Motor neuron (in vitro differentiated cells): ENCODE measurements at regions of chr5 and their contacts with region 1.

Region 1: GRCh38 chr5:67246108-67246507 is 49.5 kb upstream of the CD180 start:
- ATAC-seq: peak; percentile 29 to 77 (median 46)
- H3K4me3 ChIP-seq: no peak overlapping the region
- H3K27ac ChIP-seq: no peak overlapping the region
- H3K4me1 ChIP-seq: peaks cover 0 to 7% of the 10 kb centered on the region in 2 donors

Region 2: GRCh38 chr5:67493676-67494075 is 247.6 kb after region 1 on chr5:
- in situ Hi-C with region 1: loop called in 1 of 9 experiments (anchors 25 kb)
- ATAC-seq: peak; percentile 31 to 95 (median 65)
- H3K4me3 ChIP-seq: no peak overlapping the region
- H3K27ac ChIP-seq: no peak overlapping the region
- H3K4me1 ChIP-seq: no peaks in the 10 kb centered on the region

Region 3: DNA sequence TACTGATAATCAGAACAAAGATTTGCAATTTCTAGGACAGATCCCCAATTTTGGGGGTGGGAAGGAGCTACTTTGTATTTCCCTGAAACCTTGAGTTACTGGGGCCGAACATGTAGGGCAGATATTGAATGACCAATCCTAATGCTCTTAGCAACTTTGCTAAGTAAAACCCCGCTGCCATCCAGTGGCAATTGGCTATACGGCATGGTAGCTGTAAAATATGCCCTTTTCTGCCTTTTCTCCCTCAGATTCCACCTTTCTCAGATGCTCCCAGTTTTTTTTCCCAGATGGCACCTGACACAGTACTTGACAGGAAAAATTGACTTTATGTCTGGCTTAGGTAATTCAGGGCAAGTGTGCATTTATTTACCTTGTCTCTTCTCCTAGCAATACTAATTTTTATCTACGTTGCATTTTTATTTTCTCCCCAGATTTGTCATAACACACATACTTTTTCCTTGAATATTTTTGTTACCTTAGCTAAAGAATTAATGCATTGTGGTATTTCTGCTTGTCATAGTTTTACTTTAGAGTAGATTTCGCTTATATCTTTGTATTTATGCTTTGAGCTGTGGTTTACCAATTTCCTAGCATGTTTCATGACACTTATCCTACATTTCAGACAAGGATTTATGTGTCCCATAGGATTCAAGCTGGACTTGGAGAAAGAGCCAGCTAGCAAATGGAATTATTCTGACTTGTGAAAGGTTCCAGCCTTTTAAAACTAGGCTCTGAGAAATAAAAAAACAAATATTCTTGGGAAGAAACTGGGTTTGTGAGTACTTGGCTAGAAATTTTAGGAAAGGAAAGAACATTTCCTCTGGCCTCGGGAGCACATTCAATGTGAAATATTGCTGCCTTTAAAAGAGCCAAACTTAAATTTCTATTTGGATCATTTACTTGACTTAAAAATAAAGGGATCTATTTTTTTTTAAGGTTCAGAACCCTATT is 1006.8 kb after region 1 on chr5:
- in situ Hi-C with region 1: loop called (anchors 10 to 25 kb)
- ATAC-seq: peak; percentile 71 to 90 (median 78)
- H3K4me3 ChIP-seq: no peak overlapping the region
- H3K27ac ChIP-seq: no peak overlapping the region
- H3K4me1 ChIP-seq: peaks cover 23 to 24% of the 10 kb centered on the region in 2 donors